ENCODE measurements at regions of chr1 and their contacts with region 1.

Region 1: GRCh38 chr1:174114788-174115448 is 44.4 kb upstream of the RABGAP1L start:
- DNase-seq: peak in 1 of 2 experiments; percentile 47
- H3K4me3 ChIP-seq: no peak overlapping the region
- H3K27ac ChIP-seq: no peak overlapping the region
- H3K4me1 ChIP-seq: no peaks in the 10 kb centered on the region
- H3K27me3 ChIP-seq: no peaks in the 10 kb centered on the region
- CTCF ChIP-seq: peak in 2 of 3 experiments; percentile 38 to 85; a peak in 3 of 4 replicates
- EP300 ChIP-seq: no peak
- POLR2A ChIP-seq: no peak
- RAD21 ChIP-seq: peak; percentile 36 to 53

Region 2: GRCh38 chr1:174097426-174097825 is 17.5 kb before region 1 on chr1:
- CTCF ChIA-PET with region 1: interaction called, 13 read pairs
- POLR2A ChIA-PET with region 1: no interaction called
- DNase-seq: no peak
- H3K4me3 ChIP-seq: no peak overlapping the region
- H3K27ac ChIP-seq: no peak overlapping the region
- H3K4me1 ChIP-seq: no peaks in the 10 kb centered on the region
- H3K27me3 ChIP-seq: no peaks in the 10 kb centered on the region
- CTCF ChIP-seq: no peak
- EP300 ChIP-seq: no peak
- POLR2A ChIP-seq: no peak
- RAD21 ChIP-seq: no peak

Region 3: DNA sequence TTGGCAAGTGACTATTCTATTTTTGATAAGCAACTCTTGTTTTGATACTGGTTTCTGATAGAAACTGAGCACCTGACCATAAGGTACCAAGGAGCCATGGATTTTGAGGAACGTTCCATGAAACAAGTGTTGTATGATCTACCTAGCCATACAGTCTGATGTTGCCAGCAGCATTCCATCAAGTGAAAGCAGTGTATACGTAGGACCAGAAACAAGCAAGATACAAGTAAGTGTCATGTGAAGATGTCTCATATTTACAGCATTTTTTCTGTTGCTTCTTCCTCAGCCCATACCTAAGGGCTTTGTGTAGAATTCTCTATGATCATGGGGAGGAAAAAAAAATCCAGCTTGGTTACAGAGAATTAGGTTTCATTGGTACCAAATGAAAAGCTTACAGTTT is 11.2 kb before region 1 on chr1:
- CTCF ChIA-PET with region 1: interaction called, 13 read pairs
- POLR2A ChIA-PET with region 1: no interaction called
- DNase-seq: no peak
- H3K4me3 ChIP-seq: no peak overlapping the region
- H3K27ac ChIP-seq: no peak overlapping the region
- H3K4me1 ChIP-seq: no peaks in the 10 kb centered on the region
- H3K27me3 ChIP-seq: no peaks in the 10 kb centered on the region
- CTCF ChIP-seq: no peak
- EP300 ChIP-seq: no peak
- POLR2A ChIP-seq: no peak
- RAD21 ChIP-seq: no peak

Region 4: DNA sequence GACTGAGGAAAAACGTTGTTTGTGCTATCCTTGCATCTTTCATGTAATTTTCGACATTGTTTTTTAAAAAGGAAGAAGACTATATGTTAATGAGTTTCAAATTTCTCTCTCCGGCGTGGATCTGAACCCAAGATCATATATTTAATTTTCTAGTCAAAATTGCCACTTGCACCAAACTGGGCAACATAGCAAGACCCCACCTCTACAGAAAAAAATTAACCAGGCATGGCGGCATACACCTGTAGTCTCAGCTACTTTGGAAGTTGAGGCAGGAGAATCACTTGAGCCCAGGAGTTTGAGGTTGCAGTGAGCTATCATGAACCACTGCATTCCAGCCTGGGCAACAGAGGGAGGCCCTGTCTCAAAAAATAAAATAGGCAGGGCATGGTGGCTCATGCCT is 27.9 kb after region 1 on chr1:
- CTCF ChIA-PET with region 1: interaction called, 11 read pairs
- POLR2A ChIA-PET with region 1: no interaction called
- DNase-seq: no peak
- H3K4me3 ChIP-seq: no peak overlapping the region
- H3K27ac ChIP-seq: no peak overlapping the region
- H3K4me1 ChIP-seq: no peaks in the 10 kb centered on the region
- H3K27me3 ChIP-seq: no peaks in the 10 kb centered on the region
- CTCF ChIP-seq: no peak
- EP300 ChIP-seq: no peak
- POLR2A ChIP-seq: no peak
- RAD21 ChIP-seq: no peak

Region 5: DNA sequence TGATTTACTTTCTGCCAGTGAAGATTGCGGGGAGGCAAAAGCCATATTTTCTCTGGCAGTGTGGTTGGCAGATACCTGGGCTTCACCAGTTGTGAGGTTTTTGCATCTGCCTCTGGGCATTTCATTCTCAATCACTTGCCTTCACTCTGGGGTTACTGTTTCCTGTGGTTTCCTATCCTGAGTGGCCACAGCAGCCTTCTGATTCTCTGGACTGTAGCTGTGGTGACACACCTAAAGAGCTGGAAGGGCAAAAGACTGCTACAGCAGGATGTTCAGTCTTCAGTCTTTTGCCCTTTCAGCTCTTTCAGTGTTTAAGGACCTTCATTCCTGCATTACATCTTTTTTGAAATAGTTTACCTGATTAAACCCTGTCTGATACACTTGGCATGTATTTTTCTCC is 282.3 kb after region 1 on chr1:
- CTCF ChIA-PET with region 1: no interaction called
- POLR2A ChIA-PET with region 1: no interaction called
- DNase-seq: no peak
- H3K4me3 ChIP-seq: no peak overlapping the region
- H3K27ac ChIP-seq: no peak overlapping the region
- H3K4me1 ChIP-seq: no peaks in the 10 kb centered on the region
- H3K27me3 ChIP-seq: no peaks in the 10 kb centered on the region
- CTCF ChIP-seq: no peak
- EP300 ChIP-seq: no peak
- POLR2A ChIP-seq: no peak
- RAD21 ChIP-seq: no peak